ENCODE measurements at regions of chr11 and their contacts with region 1.

Region 1: DNA sequence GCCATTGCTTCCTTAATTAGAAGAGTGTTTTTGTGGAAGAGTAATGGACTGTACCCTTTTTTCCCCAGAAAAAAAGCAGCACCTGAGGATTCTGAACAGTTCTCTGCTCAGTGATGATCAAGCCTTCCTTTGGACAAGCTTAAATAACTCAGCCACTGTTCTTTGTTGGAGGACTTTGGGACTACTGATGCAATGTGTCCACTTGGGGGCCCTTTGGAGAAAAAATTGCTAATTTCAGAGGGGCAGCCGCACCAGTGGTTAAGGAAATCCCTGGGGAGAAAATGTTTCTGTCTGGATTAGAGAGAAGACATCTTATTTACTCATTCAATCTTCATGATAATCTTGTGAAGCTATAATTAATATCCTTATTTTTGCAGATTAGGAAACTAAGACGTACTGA is 5.3 kb upstream of the KMT2A start:
- DNase-seq: no peak
- H3K4me3 ChIP-seq: no peak overlapping the region
- H3K27ac ChIP-seq: no peak overlapping the region
- H3K4me1 ChIP-seq: peaks cover 9% of the 10 kb centered on the region
- H3K27me3 ChIP-seq: no peaks in the 10 kb centered on the region
- CTCF ChIP-seq: no peak

Region 2: GRCh38 chr11:118373871-118374270 is 57.1 kb before region 1 on chr11:
- CTCF ChIA-PET with region 1: interaction called, 4 read pairs
- POLR2A ChIA-PET with region 1: interaction called, 10 read pairs
- intact Hi-C with region 1: no loop called
- DNase-seq: no peak
- H3K4me3 ChIP-seq: no peak overlapping the region
- H3K27ac ChIP-seq: no peak overlapping the region
- H3K4me1 ChIP-seq: no peaks in the 10 kb centered on the region
- H3K27me3 ChIP-seq: no peaks in the 10 kb centered on the region
- CTCF ChIP-seq: no peak

Region 3: DNA sequence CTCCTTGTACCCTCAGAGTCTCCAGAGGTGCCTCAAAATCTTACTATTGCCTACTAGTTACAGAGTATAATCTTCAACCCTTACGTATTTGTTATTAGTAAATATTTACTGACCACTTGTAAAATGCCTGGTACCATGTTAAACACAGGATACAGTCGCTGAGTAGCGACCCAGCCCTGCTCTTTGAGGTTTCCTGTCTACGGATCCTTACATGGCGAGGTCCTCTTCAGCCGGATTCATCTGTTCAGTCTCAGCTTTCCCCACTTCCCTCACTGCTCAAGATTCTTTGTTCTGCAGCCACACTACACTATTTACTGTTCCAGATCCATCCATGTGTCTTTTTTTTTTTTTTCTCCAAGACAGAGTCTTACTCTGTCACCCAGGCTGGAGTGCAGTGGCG is 83.1 kb after region 1 on chr11:
- CTCF ChIA-PET with region 1: interaction called, 13 read pairs
- POLR2A ChIA-PET with region 1: no interaction called
- intact Hi-C with region 1: no loop called
- DNase-seq: no peak
- H3K4me3 ChIP-seq: no peak overlapping the region
- H3K27ac ChIP-seq: no peak overlapping the region
- H3K4me1 ChIP-seq: no peaks in the 10 kb centered on the region
- H3K27me3 ChIP-seq: no peaks in the 10 kb centered on the region
- CTCF ChIP-seq: no peak

Region 4: GRCh38 chr11:118771547-118772288 is 340.8 kb after region 1 on chr11:
- CTCF ChIA-PET with region 1: no interaction called
- POLR2A ChIA-PET with region 1: no interaction called
- intact Hi-C with region 1: no loop called
- DNase-seq: no peak
- H3K4me3 ChIP-seq: no peak overlapping the region
- H3K27ac ChIP-seq: no peak overlapping the region
- H3K4me1 ChIP-seq: 0 out of 2 replicates have a peak, but pooled peaks cover 7% of the 10 kb centered on the region
- H3K27me3 ChIP-seq: no peaks in the 10 kb centered on the region
- CTCF ChIP-seq: no peak